ENCODE measurements at regions of chr3 and their contacts with region 1.

Region 1: GRCh38 chr3:195259475-195260279 is 11.3 kb downstream of the XXYLT1 start:
- ATAC-seq: peak; percentile 75 to 91 (median 83)
- H3K4me3 ChIP-seq: peak overlapping the region; percentile 36 to 45 (median 38)
- H3K27ac ChIP-seq: peak overlapping the region; percentile 34 to 71
- H3K4me1 ChIP-seq: peaks cover 18 to 19% of the 10 kb centered on the region in 2 donors

Region 2: GRCh38 chr3:194671900-194672808 is 587.5 kb before region 1 on chr3 and contains the start of gene LSG1:
- in situ Hi-C with region 1: loop called in 4 of 9 experiments (anchors 10 to 25 kb)
- ATAC-seq: peak; percentile 82 to 97 (median 96)
- H3K4me3 ChIP-seq: peak within 1 kb of the TSS; percentile 46 to 68 (median 50)
- H3K27ac ChIP-seq: peak within 1 kb of the TSS; percentile 74 to 95
- H3K4me1 ChIP-seq: peaks cover 2 to 5% of the 10 kb centered on the region in 2 donors
- total RNA-seq, gene LSG1: 16.9 to 42.7 (median 27.3) TPM

Region 3: DNA sequence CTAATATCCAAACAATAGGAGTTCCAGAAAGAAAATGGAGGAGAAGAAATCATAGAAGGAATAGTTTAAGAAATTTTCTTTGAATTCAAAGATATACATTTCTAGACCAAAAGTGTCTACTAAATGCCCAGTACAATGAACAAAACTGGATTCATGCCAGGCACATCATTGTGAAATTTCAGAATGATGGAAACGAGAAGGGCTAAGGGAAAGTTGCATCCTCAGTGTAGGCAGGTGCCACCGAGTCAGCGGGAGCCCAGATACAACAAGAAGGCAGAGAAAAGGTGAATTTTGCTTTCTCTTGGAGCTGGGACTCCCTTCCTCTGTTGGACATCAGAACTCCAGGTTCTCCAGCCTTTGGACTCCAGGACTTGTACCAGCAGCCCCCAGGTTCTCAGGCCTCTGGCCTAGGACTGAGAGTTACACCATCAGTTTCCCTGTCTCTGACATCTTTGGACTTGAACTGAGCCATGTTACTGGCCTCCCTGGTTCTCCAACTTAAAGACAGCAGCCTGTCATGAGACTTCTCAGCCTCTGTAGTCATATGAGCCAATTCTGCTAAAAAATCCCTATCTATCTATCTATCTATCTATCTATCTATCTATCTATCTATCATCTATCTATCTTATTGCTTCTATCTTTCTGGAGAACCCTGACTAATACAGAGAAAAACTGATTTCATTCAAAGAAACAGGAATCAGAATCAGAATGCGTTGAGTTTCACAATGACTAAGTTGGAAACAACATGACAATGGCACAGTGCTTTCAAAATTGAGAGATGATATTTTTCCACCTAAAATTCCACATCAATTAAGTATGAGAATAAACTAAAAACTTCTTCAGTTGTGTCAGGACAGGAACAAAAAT is 366.3 kb before region 1 on chr3:
- in situ Hi-C with region 1: no loop called
- ATAC-seq: no peak
- H3K4me3 ChIP-seq: no peak overlapping the region
- H3K27ac ChIP-seq: no peak overlapping the region
- H3K4me1 ChIP-seq: no peaks in the 10 kb centered on the region